ENCODE measurements at regions of chr1 and their contacts with region 1.

Region 1: GRCh38 chr1:179002552-179003345 is 22.9 kb upstream of the FAM20B start:
- DNase-seq: peak; percentile 74
- ATAC-seq: peak; percentile 85 to 88

Region 2: DNA sequence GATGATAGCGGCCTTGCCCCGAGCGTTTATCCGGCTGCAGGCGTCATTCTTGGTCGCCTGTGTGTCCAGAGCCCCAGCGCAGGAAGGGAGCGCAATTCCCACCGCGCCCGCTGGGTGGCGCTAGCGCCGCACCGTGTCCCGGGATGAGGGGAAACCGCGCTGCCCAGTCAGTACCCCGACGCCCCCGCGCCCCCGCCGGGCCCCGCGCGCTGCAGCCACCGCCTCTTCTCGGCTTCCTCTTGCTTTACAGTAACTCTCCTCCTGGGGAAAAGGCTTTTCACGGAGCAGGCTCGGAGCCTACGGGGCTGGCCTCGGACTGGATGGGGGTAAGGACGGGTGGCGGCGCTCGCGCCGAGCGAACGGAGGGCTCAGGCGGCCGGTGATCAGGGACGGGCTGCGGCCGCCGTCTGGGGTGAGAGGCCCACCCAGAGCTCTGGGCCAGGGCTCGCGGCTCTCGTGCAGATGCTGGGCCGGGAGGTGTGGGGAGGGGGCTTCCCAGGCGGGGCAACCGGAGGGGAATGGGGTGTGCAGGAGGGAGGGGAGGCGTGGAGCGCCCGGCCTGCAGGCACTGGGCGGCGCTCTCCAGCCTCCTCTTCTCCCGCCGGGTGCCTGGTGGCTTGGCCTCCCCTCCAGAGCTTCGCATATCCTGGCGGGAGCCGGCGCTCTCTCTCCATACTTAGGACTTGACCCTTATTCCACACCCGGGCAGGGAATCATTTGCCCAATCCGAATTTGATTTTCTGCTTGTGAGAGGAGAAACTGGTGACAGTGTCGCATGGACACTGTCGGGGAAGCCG is 460.0 kb before region 1 on chr1:
- intact Hi-C with region 1: loop called (anchors 5 kb)
- DNase-seq: peak; percentile 89
- ATAC-seq: peak; percentile 90 to 93

Region 3: GRCh38 chr1:178774263-178774662 is 228.5 kb before region 1 on chr1:
- intact Hi-C with region 1: loop called (anchors 2 kb)
- DNase-seq: no peak
- ATAC-seq: no peak

Region 4: DNA sequence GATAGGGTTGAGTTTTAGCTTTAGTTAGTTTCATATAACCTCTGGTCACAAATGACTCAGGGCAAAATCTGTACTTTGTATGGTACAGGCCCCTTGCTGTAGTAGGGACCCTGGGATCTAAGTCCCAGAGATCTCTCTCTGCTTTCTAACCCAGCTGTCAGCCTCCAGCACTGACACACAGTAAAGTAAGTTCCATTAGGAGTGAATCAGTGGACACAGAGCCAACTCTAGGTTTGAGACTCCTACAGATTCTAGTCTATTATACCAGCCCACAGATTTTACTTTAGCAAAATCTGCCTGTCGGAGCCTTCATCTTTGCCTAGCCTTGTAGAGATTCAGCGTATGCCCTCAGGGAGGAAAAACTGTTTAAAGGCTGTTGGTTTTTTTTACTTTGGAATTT is 184.3 kb before region 1 on chr1:
- intact Hi-C with region 1: loop called in 1 of 2 experiments (anchors 2 kb)
- DNase-seq: no peak
- ATAC-seq: peak in 1 of 2 donors; percentile 78

Region 5: DNA sequence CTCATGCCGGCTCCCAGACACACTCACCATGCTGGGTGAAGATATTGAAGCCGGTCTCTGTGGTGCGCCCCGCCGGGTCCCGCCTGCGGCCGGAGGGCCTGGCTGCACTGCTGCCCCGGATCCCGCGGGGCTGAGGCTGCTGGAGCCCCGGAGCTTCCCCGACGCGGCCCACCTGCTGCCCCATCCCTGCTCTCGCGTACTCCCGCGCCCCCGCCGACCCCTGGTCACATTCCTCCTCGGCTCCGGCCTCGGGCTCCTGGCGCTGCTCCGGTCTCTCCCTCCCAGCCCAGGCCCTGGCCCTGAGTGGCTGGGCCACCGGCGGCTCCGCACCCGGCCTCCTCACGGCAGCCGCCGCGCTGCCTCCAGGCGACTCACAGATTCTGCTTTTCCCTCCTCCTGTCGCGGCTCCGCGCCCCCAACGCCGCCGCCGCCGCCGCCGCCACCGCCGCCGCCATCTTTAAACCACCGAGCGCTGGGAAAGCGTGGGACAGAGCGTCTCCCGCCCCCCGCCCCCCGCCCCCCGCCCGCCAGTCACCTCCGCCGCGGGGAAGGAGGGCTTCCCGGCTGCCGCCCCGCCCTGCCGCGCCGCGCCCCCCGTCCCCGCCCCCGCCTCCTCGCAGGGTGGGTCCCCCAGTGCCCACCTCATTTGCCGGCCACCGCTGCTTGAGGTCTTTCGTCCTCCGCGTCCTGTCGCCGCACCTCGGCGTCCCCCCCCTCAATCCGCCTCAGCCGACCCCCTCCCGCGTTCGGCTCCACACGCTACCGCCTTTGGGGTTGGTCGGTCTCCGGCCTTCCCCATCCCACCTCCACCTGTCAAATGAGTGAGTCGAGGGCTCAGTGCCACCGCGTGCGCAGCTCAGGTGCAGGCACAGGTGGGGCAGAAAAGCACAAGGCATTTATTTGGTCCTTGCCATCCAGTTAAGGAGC is 226.7 kb after region 1 on chr1 and contains the start of gene ABL2:
- intact Hi-C with region 1: no loop called
- DNase-seq: peak; percentile 47
- ATAC-seq: peak; percentile 90
- total RNA-seq, gene ABL2: 10.7 to 13.9 TPM

Measured in left cardiac atrium (tissue), 4 donors.